Activated T-helper 2 cell treated with anti-CD3 and anti-CD28 coated beads, Interferon-gamma antibody, Interleukin-2, Interleukin-4, amounts not matched to agents 10 μg/mL and 5 μg/mL and 100 μg/mL, durations not matched to agents 14 hours and 24 hours and 36 hours (primary cell): ENCODE measurements at regions of chr7 and their contacts with region 1.

Region 1: DNA sequence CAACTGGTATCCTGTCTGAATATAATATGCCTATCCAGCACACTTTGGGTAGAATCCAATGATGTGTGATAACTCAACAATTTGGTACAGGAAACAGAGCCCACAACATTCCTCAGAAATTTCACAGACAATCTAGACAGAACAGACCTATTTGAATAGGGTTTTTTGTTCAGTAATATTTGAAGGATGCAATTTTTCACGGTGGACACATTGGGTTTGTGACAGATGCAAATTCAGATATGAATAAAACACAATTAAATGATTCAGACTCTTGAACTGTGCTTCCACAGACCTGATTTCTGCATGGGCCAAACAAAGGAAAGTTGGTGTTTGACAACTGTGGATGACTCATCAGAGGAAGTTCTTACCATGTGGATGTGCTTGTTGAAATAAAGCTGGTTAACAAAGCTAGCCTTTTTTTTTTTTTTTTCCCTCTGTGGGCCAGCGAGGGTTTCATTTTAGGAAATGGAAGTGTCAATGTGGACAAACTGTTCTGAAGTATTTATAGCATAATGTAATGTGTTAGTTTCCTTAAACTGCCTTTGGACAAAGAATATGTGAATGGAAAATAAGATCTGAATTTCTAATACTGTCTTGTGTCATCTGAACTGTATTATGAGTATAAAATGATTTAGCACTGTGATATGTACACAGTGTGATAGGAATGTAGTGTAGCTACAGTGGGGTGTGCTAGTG is 43.2 kb upstream of the FAM133B start:
- DNase-seq: no peak
- H3K4me3 Mint-ChIP-seq: peak overlapping the region; percentile 43
- H3K27ac Mint-ChIP-seq: peak overlapping the region; percentile 96
- H3K4me1 Mint-ChIP-seq: peaks cover 70% of the 10 kb centered on the region
- H3K27me3 Mint-ChIP-seq: no peaks in the 10 kb centered on the region

Region 2: DNA sequence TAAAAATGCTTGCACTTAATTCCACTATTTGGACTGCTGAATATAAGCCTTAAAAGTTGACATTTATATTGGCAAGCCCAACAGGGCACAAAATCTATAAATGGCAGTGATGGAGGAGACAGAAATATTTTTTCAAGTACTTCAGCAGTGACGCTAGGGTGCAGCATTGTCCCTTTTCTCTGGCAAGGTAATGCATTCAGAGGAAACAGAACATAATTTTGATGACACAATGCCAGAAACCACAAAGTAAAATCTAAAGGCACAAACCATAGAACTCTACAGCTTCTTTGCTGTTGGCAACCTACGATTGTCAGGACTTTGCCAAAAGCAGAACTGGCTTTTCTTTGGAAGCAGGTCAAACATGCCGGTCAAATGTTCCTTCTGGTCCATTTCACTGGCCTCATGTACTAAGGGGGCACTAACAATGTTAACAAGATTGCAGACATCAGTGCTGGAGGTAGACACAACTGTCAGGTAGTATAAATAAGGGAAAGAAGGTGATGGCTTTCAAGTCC is 12.3 kb before region 1 on chr7:
- intact Hi-C with region 1: loop called (anchors 1 kb)
- DNase-seq: peak; percentile 73
- H3K4me3 Mint-ChIP-seq: peak overlapping the region; percentile 37
- H3K27ac Mint-ChIP-seq: peak overlapping the region; percentile 87
- H3K4me1 Mint-ChIP-seq: peaks cover 57% of the 10 kb centered on the region
- H3K27me3 Mint-ChIP-seq: no peaks in the 10 kb centered on the region

Region 3: DNA sequence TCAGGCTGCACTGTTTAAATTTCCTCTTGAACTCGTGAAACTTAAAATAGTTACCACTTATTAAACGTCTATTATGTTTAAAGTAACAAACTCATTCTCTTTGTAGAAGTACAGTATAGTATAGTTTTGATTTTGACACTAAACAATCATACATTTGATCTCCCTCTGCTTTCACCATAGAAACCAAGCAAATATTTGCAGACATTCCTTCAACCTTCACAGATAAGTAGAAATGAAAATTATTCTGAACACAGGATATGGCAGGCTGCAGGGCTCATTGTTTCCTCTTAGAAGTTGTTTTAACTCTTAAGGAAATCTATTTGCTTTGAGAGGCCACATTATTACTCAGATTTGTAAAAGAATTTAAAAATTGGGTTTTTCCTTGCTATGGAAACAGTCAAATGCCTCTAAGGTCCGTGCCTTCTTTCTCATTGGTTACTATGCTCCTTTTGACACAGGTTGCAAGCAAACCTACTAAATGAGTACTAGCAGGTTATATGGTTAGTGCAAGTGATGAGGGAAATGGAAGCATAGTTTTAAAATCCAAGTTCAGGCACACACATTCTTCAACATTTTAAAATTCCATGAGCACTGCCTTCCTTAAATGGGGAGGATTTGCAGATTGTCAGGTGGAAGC is 49.7 kb after region 1 on chr7:
- intact Hi-C with region 1: loop called (anchors 1 kb)
- DNase-seq: no peak
- H3K4me3 Mint-ChIP-seq: peak overlapping the region; percentile 60
- H3K27ac Mint-ChIP-seq: peak overlapping the region; percentile 93
- H3K4me1 Mint-ChIP-seq: peaks cover 84% of the 10 kb centered on the region
- H3K27me3 Mint-ChIP-seq: no peaks in the 10 kb centered on the region

Region 4: DNA sequence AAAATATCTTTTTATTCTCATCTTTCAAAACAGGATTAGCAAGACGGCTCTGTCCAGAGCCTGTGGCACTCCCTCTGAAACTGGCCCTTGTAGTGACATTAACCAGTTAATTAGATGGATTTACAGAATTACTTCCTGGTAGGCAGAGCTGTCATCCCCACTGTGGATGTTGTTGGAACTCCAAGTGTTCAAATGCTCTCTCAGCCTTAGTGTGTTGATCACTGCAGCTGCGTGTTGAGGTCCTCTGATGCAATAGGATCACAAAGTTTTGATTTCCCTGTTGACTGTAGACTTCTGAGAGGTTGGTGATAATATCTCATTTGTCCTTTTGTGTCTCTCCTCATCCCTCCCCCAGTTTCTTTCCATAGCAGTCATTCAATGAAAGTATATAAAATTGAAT is 320.3 kb after region 1 on chr7:
- intact Hi-C with region 1: loop called (anchors 5 kb)
- DNase-seq: no peak
- H3K4me3 Mint-ChIP-seq: no peak overlapping the region
- H3K27ac Mint-ChIP-seq: peak overlapping the region; percentile 83
- H3K4me1 Mint-ChIP-seq: peaks cover 35% of the 10 kb centered on the region
- H3K27me3 Mint-ChIP-seq: no peaks in the 10 kb centered on the region

Region 5: GRCh38 chr7:93117852-93118530 is 484.6 kb after region 1 on chr7 and contains the start of gene SAMD9:
- intact Hi-C with region 1: loop called (anchors 5 kb)
- DNase-seq: peak; percentile 58
- H3K4me3 Mint-ChIP-seq: peak within 1 kb of the TSS; percentile 85
- H3K27ac Mint-ChIP-seq: peak within 1 kb of the TSS; percentile 90
- H3K4me1 Mint-ChIP-seq: peaks cover 38% of the 10 kb centered on the region
- H3K27me3 Mint-ChIP-seq: no peaks in the 10 kb centered on the region
- total RNA-seq, gene SAMD9: 9.3 and 9.4 TPM in 2 replicates